CD4-positive, alpha-beta memory T cell (primary cell): ENCODE measurements at regions of chr13 and their contacts with region 1.

Region 1: GRCh38 chr13:43054803-43055802 is 31.7 kb downstream of the DNAJC15 start:
- DNase-seq: peak in 4 of 5 donors; percentile 39 to 52 (median 46)
- H3K4me3 ChIP-seq: peak overlapping the region; percentile 62 to 78
- H3K4me3 Mint-ChIP-seq: no peak overlapping the region
- H3K27ac ChIP-seq: peak overlapping the region; percentile 85
- H3K27ac Mint-ChIP-seq: no peak overlapping the region
- H3K4me1 ChIP-seq: peaks cover 51% of the 10 kb centered on the region
- H3K4me1 Mint-ChIP-seq: peaks cover 6 to 30% (median 18%) of the 10 kb centered on the region in 4 donors
- H3K27me3 ChIP-seq: no peaks in the 10 kb centered on the region
- H3K27me3 Mint-ChIP-seq: no peaks in the 10 kb centered on the region

Region 2: DNA sequence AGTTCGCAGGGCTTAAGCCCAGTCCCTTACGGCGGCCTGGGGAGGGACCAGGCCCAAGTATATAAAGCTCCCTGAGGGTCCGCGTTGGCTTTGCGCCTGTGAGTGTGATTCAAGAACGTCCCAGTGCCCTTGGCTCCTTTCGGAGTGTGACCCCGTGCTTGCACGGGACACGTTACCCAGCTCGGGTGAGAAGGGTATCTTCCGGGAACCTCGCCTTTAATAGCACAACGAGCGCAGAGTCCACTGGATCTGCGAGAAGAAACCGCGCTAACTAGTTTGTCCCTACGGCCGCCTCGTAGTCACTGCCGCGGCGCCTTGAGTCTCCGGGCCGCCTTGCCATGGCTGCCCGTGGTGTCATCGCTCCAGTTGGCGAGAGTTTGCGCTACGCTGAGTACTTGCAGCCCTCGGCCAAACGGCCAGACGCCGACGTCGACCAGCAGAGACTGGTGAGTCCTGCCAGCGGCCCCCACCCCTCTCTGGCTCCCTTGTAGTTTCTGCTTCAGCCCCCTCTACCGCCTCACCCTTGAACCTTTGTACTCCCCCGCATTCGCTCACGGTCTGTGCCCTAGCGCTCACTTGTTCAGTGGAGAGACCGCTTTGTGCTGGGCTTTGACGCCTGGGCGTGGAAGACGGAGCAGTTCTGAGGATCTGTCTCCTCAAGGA is 31.7 kb before region 1 on chr13 and contains the start of gene DNAJC15:
- CTCF ChIA-PET with region 1: interaction called, 4 read pairs
- POLR2A ChIA-PET with region 1: interaction called, 18 read pairs
- intact Hi-C with region 1: loop called (anchors 1 kb)
- DNase-seq: peak; percentile 81 to 87 (median 84)
- H3K4me3 ChIP-seq: peak within 1 kb of the TSS; percentile 85 to 92
- H3K4me3 Mint-ChIP-seq: peak within 1 kb of the TSS; percentile 90 to 100 (median 98)
- H3K27ac ChIP-seq: peak within 1 kb of the TSS; percentile 66
- H3K27ac Mint-ChIP-seq: peak within 1 kb of the TSS; percentile 87 to 99 (median 98)
- H3K4me1 ChIP-seq: peaks cover 35% of the 10 kb centered on the region
- H3K4me1 Mint-ChIP-seq: peaks cover 19 to 42% (median 32%) of the 10 kb centered on the region in 4 donors
- H3K27me3 ChIP-seq: no peaks in the 10 kb centered on the region
- H3K27me3 Mint-ChIP-seq: no peaks in the 10 kb centered on the region
- total RNA-seq, gene DNAJC15: 9.7 to 11.1 TPM

Region 3: GRCh38 chr13:43044720-43045301 is 10.3 kb before region 1 on chr13:
- CTCF ChIA-PET with region 1: interaction called, 6 read pairs
- POLR2A ChIA-PET with region 1: interaction called, 6 read pairs
- intact Hi-C with region 1: loop called (anchors 1 kb)
- DNase-seq: no peak
- H3K4me3 ChIP-seq: no peak overlapping the region
- H3K4me3 Mint-ChIP-seq: peak overlapping the region; percentile 38 to 80 (median 55)
- H3K27ac ChIP-seq: peak overlapping the region; percentile 16
- H3K27ac Mint-ChIP-seq: peak overlapping the region; percentile 64 to 88 (median 77)
- H3K4me1 ChIP-seq: peaks cover 36% of the 10 kb centered on the region
- H3K4me1 Mint-ChIP-seq: peaks cover 39 to 80% (median 56%) of the 10 kb centered on the region in 4 donors
- H3K27me3 ChIP-seq: no peaks in the 10 kb centered on the region
- H3K27me3 Mint-ChIP-seq: no peaks in the 10 kb centered on the region

Region 4: GRCh38 chr13:43363156-43363898 is 308.2 kb after region 1 on chr13:
- CTCF ChIA-PET with region 1: no interaction called
- POLR2A ChIA-PET with region 1: no interaction called
- intact Hi-C with region 1: no loop called
- DNase-seq: no peak
- H3K4me3 ChIP-seq: no peak overlapping the region
- H3K4me3 Mint-ChIP-seq: no peak overlapping the region
- H3K27ac ChIP-seq: no peak overlapping the region
- H3K27ac Mint-ChIP-seq: no peak overlapping the region
- H3K4me1 ChIP-seq: peaks cover 10% of the 10 kb centered on the region
- H3K4me1 Mint-ChIP-seq: peaks cover 10 to 13% (median 11%) of the 10 kb centered on the region in 4 donors
- H3K27me3 ChIP-seq: no peaks in the 10 kb centered on the region
- H3K27me3 Mint-ChIP-seq: no peaks in the 10 kb centered on the region

Region 5: DNA sequence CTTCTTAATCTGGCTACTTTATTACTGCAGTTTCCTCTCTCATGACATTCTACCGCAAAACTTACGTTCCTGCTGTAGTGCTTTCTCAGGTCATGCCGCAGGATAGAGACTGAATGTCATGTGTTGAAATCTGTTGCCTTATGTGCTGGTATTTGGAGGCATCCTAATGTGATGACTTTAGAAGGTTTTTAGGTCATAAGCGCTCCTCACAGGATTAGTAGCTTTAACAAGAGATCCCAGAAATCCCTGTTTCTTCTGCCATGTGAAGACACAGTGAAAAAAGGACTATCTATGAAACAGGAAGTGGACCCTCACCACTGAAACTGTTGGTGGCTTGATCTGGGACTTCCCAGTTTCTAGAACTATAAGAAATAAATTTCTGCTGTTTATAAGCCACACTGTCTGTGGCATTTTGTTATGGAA is 1033.9 kb after region 1 on chr13:
- CTCF ChIA-PET with region 1: no interaction called
- POLR2A ChIA-PET with region 1: no interaction called
- intact Hi-C with region 1: no loop called
- DNase-seq: peak in 3 of 5 donors; percentile 2 to 16 (median 2)
- H3K4me3 ChIP-seq: no peak overlapping the region
- H3K4me3 Mint-ChIP-seq: no peak overlapping the region
- H3K27ac ChIP-seq: no peak overlapping the region
- H3K27ac Mint-ChIP-seq: peak overlapping the region in 3 of 7 donors; percentile 51 to 87 (median 82)
- H3K4me1 ChIP-seq: no peaks in the 10 kb centered on the region
- H3K4me1 Mint-ChIP-seq: peaks cover 7 to 17% (median 9%) of the 10 kb centered on the region in 4 donors
- H3K27me3 ChIP-seq: no peaks in the 10 kb centered on the region
- H3K27me3 Mint-ChIP-seq: peaks cover 10 to 15% of the 10 kb centered on the region in 2 donors